Gastrocnemius medialis (tissue), 4 donors: ENCODE measurements at regions of chr2 and their contacts with region 1.

Region 1: GRCh38 chr2:69643602-69644505 is at the start of gene AAK1:
- DNase-seq: peak; percentile 81 to 85
- ATAC-seq: peak; percentile 80 to 89
- H3K4me3 ChIP-seq: peak within 1 kb of the TSS; percentile 89 to 98 (median 94)
- H3K27ac ChIP-seq: peak within 1 kb of the TSS; percentile 94 to 99 (median 96)
- H3K4me1 ChIP-seq: peaks cover 40 to 51% of the 10 kb centered on the region in 2 donors
- H3K27me3 ChIP-seq: no peaks in the 10 kb centered on the region
- CTCF ChIP-seq: peak in 2 of 5 experiments; percentile 24 to 40
- POLR2A ChIP-seq: peak; percentile 94
- total RNA-seq, gene AAK1: 30.0 to 47.3 (median 39.1) TPM

Region 2: GRCh38 chr2:69436938-69437750 is 206.7 kb before region 1 on chr2 and contains the start of gene NFU1:
- in situ Hi-C with region 1: no loop called
- intact Hi-C with region 1: loop called (anchors 2 kb)
- DNase-seq: peak; percentile 86 to 93
- ATAC-seq: peak; percentile 85 to 89
- H3K4me3 ChIP-seq: peak within 1 kb of the TSS; percentile 67 to 95 (median 88)
- H3K27ac ChIP-seq: peak within 1 kb of the TSS; percentile 91 to 97 (median 96)
- H3K4me1 ChIP-seq: peaks cover 0 to 14% of the 10 kb centered on the region in 2 donors
- H3K27me3 ChIP-seq: no peaks in the 10 kb centered on the region
- CTCF ChIP-seq: peak; percentile 78 to 81 (median 80)
- POLR2A ChIP-seq: peak; percentile 63 to 84
- total RNA-seq, gene NFU1: 41.4 to 73.1 (median 68.1) TPM

Region 3: GRCh38 chr2:69499242-69499641 is 144.6 kb before region 1 on chr2:
- in situ Hi-C with region 1: no loop called
- intact Hi-C with region 1: no loop called
- DNase-seq: no peak
- ATAC-seq: no peak
- H3K4me3 ChIP-seq: no peak overlapping the region
- H3K27ac ChIP-seq: no peak overlapping the region
- H3K4me1 ChIP-seq: no peaks in the 10 kb centered on the region
- H3K27me3 ChIP-seq: no peaks in the 10 kb centered on the region
- CTCF ChIP-seq: no peak
- POLR2A ChIP-seq: no peak

Region 4: GRCh38 chr2:69565431-69565839 is 78.4 kb before region 1 on chr2:
- in situ Hi-C with region 1: loop called (anchors 5 to 10 kb)
- intact Hi-C with region 1: loop called (anchors 1 kb)
- DNase-seq: peak in 1 of 2 donors; percentile 22
- ATAC-seq: peak in 1 of 2 donors; percentile 35
- H3K4me3 ChIP-seq: no peak overlapping the region
- H3K27ac ChIP-seq: no peak overlapping the region
- H3K4me1 ChIP-seq: peaks cover 27 to 80% of the 10 kb centered on the region in 2 donors
- H3K27me3 ChIP-seq: no peaks in the 10 kb centered on the region
- CTCF ChIP-seq: peak; percentile 28 to 67 (median 45)
- POLR2A ChIP-seq: no peak

Region 5: DNA sequence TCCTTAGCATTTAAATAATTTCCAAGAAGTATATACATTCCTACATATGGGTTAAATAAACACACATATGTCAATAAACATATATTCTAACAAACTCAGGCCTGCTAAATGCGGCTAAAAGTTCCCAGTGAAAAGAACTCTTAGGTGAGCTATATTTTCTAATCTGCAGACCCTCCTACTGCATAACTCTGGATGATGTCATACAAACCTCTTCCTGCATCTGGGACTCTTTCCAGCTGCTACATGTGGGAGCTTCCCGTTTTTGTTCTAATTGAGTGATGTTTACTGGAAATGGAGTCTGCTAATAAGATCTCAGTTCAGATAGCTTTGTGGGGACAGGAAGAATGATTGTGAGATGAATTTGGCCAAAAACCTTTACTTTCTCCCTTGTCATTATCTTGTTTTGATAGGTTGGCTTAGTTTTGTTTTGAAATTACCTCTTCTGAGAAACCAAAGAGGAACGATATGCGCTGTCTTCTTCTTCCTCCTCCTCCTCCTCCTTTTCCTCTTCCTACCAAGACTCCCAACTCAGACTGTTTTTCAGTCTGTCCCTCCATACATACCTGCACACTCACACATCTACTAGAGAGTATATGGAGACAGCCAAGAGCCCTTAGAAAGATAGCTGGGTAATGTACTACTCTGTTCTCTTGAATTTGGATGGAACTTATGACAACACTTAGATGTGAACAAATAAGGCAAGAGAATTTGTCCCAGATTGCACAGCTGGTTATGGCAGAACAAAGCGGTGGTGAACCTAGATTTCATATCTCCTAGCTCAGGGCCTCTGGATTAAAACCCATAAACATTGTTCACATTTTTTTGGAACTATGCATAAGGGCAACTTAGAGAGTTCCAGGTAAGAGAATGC is 39.5 kb after region 1 on chr2:
- in situ Hi-C with region 1: no loop called
- intact Hi-C with region 1: no loop called
- DNase-seq: no peak
- ATAC-seq: peak; percentile 54 to 78
- H3K4me3 ChIP-seq: no peak overlapping the region
- H3K27ac ChIP-seq: peak overlapping the region in 3 of 4 donors; percentile 51 to 71 (median 52)
- H3K4me1 ChIP-seq: peaks cover 0 to 21% of the 10 kb centered on the region in 2 donors
- H3K27me3 ChIP-seq: no peaks in the 10 kb centered on the region
- CTCF ChIP-seq: no peak
- POLR2A ChIP-seq: no peak

Region 6: GRCh38 chr2:69717861-69718273 is 74.0 kb after region 1 on chr2:
- in situ Hi-C with region 1: no loop called
- intact Hi-C with region 1: loop called (anchors 5 kb)
- DNase-seq: no peak
- ATAC-seq: no peak
- H3K4me3 ChIP-seq: no peak overlapping the region
- H3K27ac ChIP-seq: no peak overlapping the region
- H3K4me1 ChIP-seq: no peaks in the 10 kb centered on the region
- H3K27me3 ChIP-seq: no peaks in the 10 kb centered on the region
- CTCF ChIP-seq: no peak
- POLR2A ChIP-seq: no peak

Region 7: GRCh38 chr2:70248181-70248847 is 604.5 kb after region 1 on chr2 and contains the start of gene TIA1:
- in situ Hi-C with region 1: no loop called
- intact Hi-C with region 1: loop called (anchors 5 kb)
- DNase-seq: peak; percentile 97 to 98
- ATAC-seq: peak; percentile 96 to 97
- H3K4me3 ChIP-seq: peak within 1 kb of the TSS; percentile 87 to 99 (median 92)
- H3K27ac ChIP-seq: peak within 1 kb of the TSS; percentile 94 to 99 (median 95)
- H3K4me1 ChIP-seq: peaks cover 21 to 27% of the 10 kb centered on the region in 2 donors
- H3K27me3 ChIP-seq: no peaks in the 10 kb centered on the region
- CTCF ChIP-seq: no peak
- POLR2A ChIP-seq: peak; percentile 65 to 73
- total RNA-seq, gene TIA1: 20.2 to 54.8 (median 26.6) TPM